ENCODE measurements at regions of chr6 and their contacts with region 1.

Region 1: GRCh38 chr6:169789982-169790927 is 38.8 kb downstream of the ERMARD start:
- DNase-seq: peak; percentile 82
- ATAC-seq: peak; percentile 89
- H3K4me3 ChIP-seq: peak overlapping the region; percentile 64 to 80 (median 65)
- H3K27ac ChIP-seq: peak overlapping the region; percentile 85
- H3K4me1 ChIP-seq: peaks cover 58% of the 10 kb centered on the region
- H3K27me3 ChIP-seq: no peaks in the 10 kb centered on the region
- CTCF ChIP-seq: peak; percentile 99
- EP300 ChIP-seq: 0 out of 4 replicates have a peak, but pooled peaks of 1 of the 2 experiments have one; percentile 5
- POLR2A ChIP-seq: peak; percentile 76 to 81
- RAD21 ChIP-seq: peak; percentile 99

Region 2: DNA sequence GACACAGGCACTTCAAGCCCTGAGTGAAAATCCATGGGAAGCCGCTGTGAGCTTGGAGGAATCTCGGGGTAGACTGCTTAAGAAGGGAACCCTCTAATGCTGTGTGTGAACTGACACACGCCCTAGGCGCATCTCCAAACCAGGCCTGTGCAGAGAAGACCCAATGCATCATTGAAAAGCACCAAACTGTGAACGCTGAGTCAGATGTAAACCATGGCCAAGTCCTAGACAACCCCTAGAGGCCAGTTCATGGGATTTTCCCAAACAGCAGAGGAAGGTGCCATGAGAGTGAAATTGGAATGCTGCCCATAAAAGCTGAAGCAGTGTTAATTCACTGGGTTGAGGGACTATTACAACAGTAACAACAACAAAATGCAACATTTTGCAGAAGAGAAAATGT is 1052.8 kb before region 1 on chr6:
- CTCF ChIA-PET with region 1: no interaction called
- POLR2A ChIA-PET with region 1: no interaction called
- in situ Hi-C with region 1: no loop called
- intact Hi-C with region 1: no loop called
- DNase-seq: peak; percentile 18
- ATAC-seq: peak; percentile 55; the same call in 2 of the 3 replicates
- H3K4me3 ChIP-seq: no peak overlapping the region
- H3K27ac ChIP-seq: no peak overlapping the region
- H3K4me1 ChIP-seq: no peaks in the 10 kb centered on the region
- H3K27me3 ChIP-seq: peaks cover 2 to 5% of the 10 kb centered on the region in 2 experiments; a peak in 2 of 5 replicates
- CTCF ChIP-seq: no peak
- EP300 ChIP-seq: no peak
- POLR2A ChIP-seq: no peak
- RAD21 ChIP-seq: no peak

Region 3: DNA sequence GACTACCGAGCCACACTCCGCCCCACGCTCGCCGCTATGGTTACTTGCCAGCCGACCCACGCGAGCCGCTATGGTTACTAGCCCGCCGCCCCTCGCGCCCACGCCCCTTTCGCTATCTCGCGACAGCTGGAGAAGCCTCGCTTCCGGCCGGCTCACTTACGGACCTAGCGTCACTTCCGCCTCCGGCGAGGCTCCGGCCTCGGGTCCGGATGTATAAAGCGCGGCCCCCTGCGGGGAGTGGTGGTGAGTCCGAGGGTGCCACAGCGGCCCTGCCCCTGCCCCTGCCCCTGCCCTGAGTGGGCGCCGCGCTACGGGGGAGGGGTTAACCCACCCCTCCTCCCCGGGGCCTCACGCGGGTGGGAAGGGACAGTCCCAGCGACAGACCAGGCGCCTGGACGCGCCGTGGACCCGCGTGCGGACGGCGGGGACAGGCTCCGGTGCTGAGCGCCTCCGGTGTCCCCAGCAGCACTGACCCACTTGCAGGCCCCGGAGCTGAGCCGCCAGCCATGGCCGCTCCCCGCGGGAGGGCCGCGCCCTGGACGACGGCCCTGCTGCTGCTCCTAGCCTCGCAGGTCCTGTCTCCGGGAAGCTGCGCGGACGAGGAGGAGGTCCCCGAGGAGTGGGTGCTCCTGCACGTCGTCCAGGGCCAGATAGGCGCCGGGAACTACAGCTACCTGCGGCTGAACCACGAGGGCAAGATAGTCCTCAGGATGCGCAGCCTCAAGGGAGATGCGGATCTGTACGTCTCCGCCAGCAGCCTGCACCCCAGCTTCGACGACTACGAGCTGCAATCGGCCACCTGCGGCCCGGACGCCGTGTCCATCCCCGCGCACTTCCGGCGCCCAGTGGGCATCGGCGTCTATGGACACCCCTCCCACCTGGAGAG is 88.1 kb before region 1 on chr6 and contains the starts of genes C6orf120 and WDR27:
- CTCF ChIA-PET with region 1: no interaction called
- POLR2A ChIA-PET with region 1: interaction called, 19 read pairs
- in situ Hi-C with region 1: no loop called
- intact Hi-C with region 1: loop called (anchors 2 kb)
- DNase-seq: peak; percentile 96
- ATAC-seq: peak; percentile 95
- H3K4me3 ChIP-seq: peak within 1 kb of the TSS; percentile 82 to 98 (median 87)
- H3K27ac ChIP-seq: peak within 1 kb of the TSS; percentile 93
- H3K4me1 ChIP-seq: peaks cover 45% of the 10 kb centered on the region
- H3K27me3 ChIP-seq: no peaks in the 10 kb centered on the region; a peak in 1 of 5 replicates
- CTCF ChIP-seq: peak; percentile 54
- EP300 ChIP-seq: 0 out of 4 replicates have a peak, but pooled peaks of 1 of the 2 experiments have one; percentile 41
- POLR2A ChIP-seq: peak; percentile 87 to 96
- RAD21 ChIP-seq: peak; percentile 30; the same call in 1 of the 2 replicates
- total RNA-seq, gene C6orf120: 24.9 and 29.9 TPM in 2 replicates
- total RNA-seq, gene WDR27: 10.0 and 34.1 TPM in 2 replicates

Region 4: GRCh38 chr6:169751242-169752073 is 38.8 kb before region 1 on chr6 and contains the starts of genes DYNLT2 and ERMARD:
- CTCF ChIA-PET with region 1: no interaction called
- POLR2A ChIA-PET with region 1: interaction called, 52 read pairs
- in situ Hi-C with region 1: no loop called
- intact Hi-C with region 1: loop called (anchors 1 kb)
- DNase-seq: peak; percentile 96
- ATAC-seq: peak; percentile 95
- H3K4me3 ChIP-seq: peak within 1 kb of the TSS; percentile 88 to 91 (median 90)
- H3K27ac ChIP-seq: peak within 1 kb of the TSS; percentile 96
- H3K4me1 ChIP-seq: peaks cover 48% of the 10 kb centered on the region
- H3K27me3 ChIP-seq: no peaks in the 10 kb centered on the region; a peak in 1 of 5 replicates
- CTCF ChIP-seq: peak; percentile 52
- EP300 ChIP-seq: peak in 1 of 2 experiments; percentile 68; a peak in 3 of 4 replicates
- POLR2A ChIP-seq: peak; percentile 90 to 99
- RAD21 ChIP-seq: peak; percentile 88
- total RNA-seq, gene DYNLT2: 3.1 and 4.3 TPM in 2 replicates
- total RNA-seq, gene ERMARD: 8.4 and 10.7 TPM in 2 replicates

Region 5: DNA sequence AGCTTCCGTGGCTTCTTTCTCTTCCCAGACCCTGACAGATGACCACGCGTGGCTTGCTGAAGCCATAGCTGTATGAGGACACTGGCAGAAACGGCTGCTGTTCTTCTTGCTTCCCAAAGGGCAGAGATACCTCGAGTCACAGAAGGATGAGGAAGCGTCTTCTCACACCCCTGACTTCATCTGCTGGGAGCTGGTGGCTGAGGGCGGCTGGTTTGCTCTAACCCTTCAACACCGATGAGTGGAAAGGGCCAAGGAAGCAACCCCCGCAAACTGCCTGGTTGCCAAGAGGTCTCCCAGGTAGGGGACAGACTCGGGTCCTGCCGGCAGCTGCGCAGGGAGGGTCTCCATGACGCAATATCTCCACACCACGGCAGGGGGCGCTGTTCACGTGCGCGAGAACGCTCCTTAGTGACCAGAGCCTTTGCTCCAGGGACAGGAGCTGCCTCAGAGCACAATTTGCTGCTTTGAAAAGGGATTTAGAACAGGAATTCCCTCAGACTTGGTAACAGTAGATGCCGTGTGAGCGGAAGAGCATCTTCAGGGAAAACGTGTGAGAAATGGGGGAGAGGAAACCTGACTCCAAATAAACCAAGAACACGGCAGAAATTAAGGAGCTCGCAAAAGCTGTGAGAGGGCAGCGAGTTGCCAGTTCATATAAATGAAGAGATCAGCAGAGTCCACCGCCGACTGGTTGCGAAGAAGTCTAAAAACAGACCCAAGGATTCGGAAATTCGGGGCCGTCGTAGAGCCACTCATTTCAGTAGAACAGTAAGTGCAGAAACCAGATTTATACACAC is 41.4 kb after region 1 on chr6:
- CTCF ChIA-PET with region 1: interaction called, 15 read pairs
- POLR2A ChIA-PET with region 1: interaction called, 9 read pairs
- in situ Hi-C with region 1: no loop called
- intact Hi-C with region 1: loop called (anchors 1 kb)
- DNase-seq: peak; percentile 60
- ATAC-seq: peak; percentile 95
- H3K4me3 ChIP-seq: peak overlapping the region in 1 of 3 experiments; percentile 38; a peak in 2 of 6 replicates
- H3K27ac ChIP-seq: no peak overlapping the region
- H3K4me1 ChIP-seq: peaks cover 19% of the 10 kb centered on the region
- H3K27me3 ChIP-seq: peaks cover 0 to 24% of the 10 kb centered on the region in 2 experiments; a peak in 4 of 5 replicates
- CTCF ChIP-seq: peak; percentile 100
- EP300 ChIP-seq: no peak
- POLR2A ChIP-seq: no peak
- RAD21 ChIP-seq: peak; percentile 94

Region 6: DNA sequence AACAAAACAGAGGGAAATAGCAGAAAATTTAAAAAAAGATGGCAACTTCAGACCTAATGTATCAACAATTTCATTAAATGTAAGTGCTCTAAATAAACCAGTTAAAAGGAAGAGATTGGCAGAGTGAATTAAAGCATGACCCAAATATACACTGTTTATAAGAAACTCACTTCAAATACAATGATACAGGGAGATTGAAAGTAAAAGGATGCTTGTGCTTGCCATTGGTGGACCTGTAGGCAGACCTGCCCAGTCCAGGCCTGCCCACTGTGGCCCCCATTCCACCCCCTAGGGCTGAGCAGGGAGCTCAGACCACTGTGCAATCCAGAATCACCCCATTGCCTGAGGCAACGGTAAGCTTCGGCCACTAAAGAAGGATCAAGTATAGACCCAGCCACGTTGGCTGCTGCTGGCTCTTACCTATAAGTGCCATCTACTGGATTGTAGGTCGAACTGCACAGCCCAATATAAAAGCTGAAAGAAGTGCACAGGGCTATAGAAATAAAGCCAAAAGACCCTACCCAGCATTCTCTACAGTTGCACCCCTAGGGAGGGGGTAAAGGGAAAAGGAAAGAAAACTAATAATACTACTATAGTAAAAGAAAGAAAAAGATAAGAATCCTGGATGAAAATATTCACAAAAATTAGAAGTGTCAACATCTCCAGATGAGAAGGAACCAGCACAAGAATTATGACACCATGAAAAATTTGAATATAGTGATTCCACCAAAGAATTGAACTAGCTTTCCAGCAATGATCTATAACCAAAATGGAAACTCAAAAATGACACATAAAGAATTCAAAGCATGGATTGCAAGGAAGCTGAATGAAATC is 726.7 kb after region 1 on chr6:
- CTCF ChIA-PET with region 1: no interaction called
- POLR2A ChIA-PET with region 1: interaction called, 4 read pairs
- in situ Hi-C with region 1: no loop called
- intact Hi-C with region 1: loop called (anchors 1 kb)
- DNase-seq: peak; percentile 74
- ATAC-seq: peak; percentile 100
- H3K4me3 ChIP-seq: peak overlapping the region in 1 of 3 experiments; percentile 24; a peak in 1 of 6 replicates
- H3K27ac ChIP-seq: no peak overlapping the region
- H3K4me1 ChIP-seq: 0 out of 2 replicates have a peak, but pooled peaks cover 5% of the 10 kb centered on the region
- H3K27me3 ChIP-seq: no peaks in the 10 kb centered on the region
- CTCF ChIP-seq: peak; percentile 93
- EP300 ChIP-seq: no peak
- POLR2A ChIP-seq: no peak
- RAD21 ChIP-seq: peak; percentile 87

Region 7: DNA sequence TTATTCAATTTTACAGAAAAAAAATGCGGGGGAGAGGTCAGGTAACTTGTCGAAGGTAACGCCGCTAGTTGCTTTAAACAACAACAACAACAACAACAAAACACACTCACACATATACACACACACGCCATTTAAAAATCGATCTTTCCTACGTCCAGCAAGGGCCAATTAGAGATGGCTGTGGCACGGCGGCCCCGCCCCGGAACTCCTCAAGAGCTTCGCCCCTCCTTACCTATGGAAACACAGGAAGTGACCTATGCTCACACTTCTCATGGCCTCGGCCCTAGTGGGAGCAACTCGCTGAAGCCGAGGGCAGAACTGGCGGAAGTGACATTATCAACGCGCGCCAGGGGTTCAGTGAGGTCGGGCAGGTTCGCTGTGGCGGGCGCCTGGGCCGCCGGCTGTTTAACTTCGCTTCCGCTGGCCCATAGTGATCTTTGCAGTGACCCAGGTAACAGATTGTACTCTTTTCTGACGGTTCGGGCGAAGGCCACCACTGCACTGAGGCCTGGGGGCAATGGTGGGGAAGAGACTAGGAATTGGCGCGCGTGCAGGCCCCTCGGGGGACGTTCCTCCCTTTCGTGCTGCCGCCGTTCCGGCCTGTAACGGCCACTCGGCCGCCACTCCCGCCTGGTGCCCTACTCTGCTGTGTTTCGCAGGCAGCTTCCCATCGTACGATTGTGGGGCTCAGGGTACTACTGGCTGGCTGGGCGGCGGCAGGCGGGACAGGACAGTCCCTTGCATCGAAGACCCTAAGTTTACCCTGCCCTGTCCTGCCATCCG is 763.9 kb after region 1 on chr6 and contains the start of gene TBP:
- CTCF ChIA-PET with region 1: no interaction called
- POLR2A ChIA-PET with region 1: interaction called, 11 read pairs
- in situ Hi-C with region 1: no loop called
- intact Hi-C with region 1: no loop called
- DNase-seq: peak; percentile 100
- ATAC-seq: peak; percentile 92
- H3K4me3 ChIP-seq: peak within 1 kb of the TSS; percentile 98 to 99 (median 98)
- H3K27ac ChIP-seq: peak within 1 kb of the TSS; percentile 95
- H3K4me1 ChIP-seq: peaks cover 51% of the 10 kb centered on the region
- H3K27me3 ChIP-seq: peaks cover 0 to 5% of the 10 kb centered on the region in 2 experiments; a peak in 1 of 5 replicates
- CTCF ChIP-seq: peak; percentile 26; the same call in 1 of the 2 replicates
- EP300 ChIP-seq: peak in 1 of 2 experiments; percentile 40; a peak in 2 of 4 replicates
- POLR2A ChIP-seq: peak; percentile 75 to 93
- RAD21 ChIP-seq: peak; percentile 40; the same call in 1 of the 2 replicates
- total RNA-seq, gene TBP: 21.7 and 25.9 TPM in 2 replicates

Measured in HepG2 (cell line).